ENCODE measurements at regions of chr1 and their contacts with region 1.

Region 1: GRCh38 chr1:160675641-160676410 is 29.0 kb upstream of the SLAMF1 start:
- DNase-seq: peak; percentile 58 to 84 (median 60)
- H3K4me3 ChIP-seq: no peak overlapping the region
- H3K4me3 Mint-ChIP-seq: peak overlapping the region in 2 of 7 donors; percentile 24 to 63
- H3K27ac ChIP-seq: no peak overlapping the region
- H3K27ac Mint-ChIP-seq: peak overlapping the region in 7 of 8 donors; percentile 58 to 87 (median 82)
- H3K4me1 ChIP-seq: peaks cover 42% of the 10 kb centered on the region
- H3K4me1 Mint-ChIP-seq: peaks cover 19 to 35% (median 23%) of the 10 kb centered on the region in 3 donors
- H3K27me3 ChIP-seq: no peaks in the 10 kb centered on the region
- H3K27me3 Mint-ChIP-seq: no peaks in the 10 kb centered on the region

Region 2: DNA sequence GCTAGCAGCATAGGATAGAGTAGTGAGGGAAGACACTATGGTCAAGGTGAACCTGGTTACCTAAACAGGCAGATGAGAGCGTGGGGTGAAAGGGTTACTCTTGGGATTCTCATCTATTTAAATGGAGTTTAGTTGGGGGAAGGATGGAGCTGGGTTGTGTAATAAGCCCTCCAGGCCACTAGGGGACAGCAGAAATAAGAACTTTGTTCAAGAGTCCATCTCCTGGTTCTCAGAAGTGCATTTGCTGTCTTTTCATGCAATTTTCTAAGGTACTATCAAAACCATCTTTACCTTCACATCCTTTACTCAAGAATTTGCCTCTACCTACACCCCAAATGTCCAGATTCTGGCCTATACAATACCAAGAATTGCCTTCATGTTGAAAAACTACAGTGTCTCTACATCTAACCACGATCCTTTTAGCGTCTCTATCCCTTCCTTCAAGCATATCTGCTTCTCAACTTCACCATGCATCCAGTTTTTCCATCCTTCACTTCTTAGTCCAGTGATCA is 57.0 kb before region 1 on chr1:
- CTCF ChIA-PET with region 1: interaction called, 67 read pairs
- POLR2A ChIA-PET with region 1: no interaction called
- DNase-seq: peak in 4 of 5 donors; percentile 21 to 63 (median 44)
- H3K4me3 ChIP-seq: no peak overlapping the region
- H3K4me3 Mint-ChIP-seq: peak overlapping the region in 1 of 7 donors; percentile 1
- H3K27ac ChIP-seq: no peak overlapping the region
- H3K27ac Mint-ChIP-seq: peak overlapping the region; percentile 3 to 91 (median 63)
- H3K4me1 ChIP-seq: peaks cover 37% of the 10 kb centered on the region
- H3K4me1 Mint-ChIP-seq: peaks cover 62 to 86% (median 75%) of the 10 kb centered on the region in 3 donors
- H3K27me3 ChIP-seq: no peaks in the 10 kb centered on the region
- H3K27me3 Mint-ChIP-seq: no peaks in the 10 kb centered on the region

Region 3: DNA sequence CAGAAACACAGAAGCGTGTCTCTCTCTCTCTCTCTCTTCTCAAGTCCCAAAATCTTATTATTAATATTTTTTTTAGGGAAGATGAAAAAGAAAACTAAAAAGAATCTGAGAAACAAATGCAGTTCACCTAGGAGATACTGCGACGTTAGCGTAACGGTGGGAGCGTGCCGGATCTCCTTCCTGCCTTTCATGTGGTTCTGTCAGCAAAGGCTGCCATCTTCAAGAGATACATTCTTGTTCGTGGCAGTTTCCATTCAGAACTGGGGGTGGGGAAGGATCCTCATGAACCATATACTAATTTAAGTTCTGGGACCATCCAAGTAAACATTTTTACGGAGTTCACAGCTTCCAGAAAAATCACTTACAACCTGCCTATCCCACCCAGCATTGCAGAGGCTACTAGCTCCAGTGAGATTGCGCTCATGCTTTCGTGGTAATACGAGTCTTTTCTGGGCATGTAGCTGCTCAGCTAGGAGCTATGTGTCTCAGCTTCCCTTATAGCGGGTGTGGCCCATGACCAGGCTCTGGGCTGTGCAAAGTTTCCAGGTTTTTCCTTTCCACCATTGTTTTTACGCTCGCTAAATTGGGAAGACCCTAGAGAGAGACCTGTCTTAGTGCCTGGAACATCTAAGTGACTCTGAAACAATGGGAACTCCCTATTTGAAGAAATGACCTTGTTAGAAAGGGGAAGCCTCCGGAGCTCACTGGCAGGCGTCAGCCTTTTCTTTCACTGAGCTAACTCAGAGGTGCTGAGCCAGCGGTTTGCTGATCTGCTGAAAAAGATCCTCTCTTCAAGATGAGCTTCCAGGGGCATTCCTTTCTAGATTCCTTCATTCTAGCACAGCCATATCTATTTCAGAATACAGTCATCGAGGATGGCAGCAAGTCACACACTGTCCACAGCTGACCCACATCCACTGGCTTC is 46.3 kb before region 1 on chr1:
- CTCF ChIA-PET with region 1: interaction called, 67 read pairs
- POLR2A ChIA-PET with region 1: interaction called, 3 read pairs
- DNase-seq: peak; percentile 50 to 90 (median 85)
- H3K4me3 ChIP-seq: peak overlapping the region; percentile 52
- H3K4me3 Mint-ChIP-seq: peak overlapping the region; percentile 72 to 87 (median 82)
- H3K27ac ChIP-seq: peak overlapping the region; percentile 78
- H3K27ac Mint-ChIP-seq: peak overlapping the region; percentile 83 to 99 (median 98)
- H3K4me1 ChIP-seq: peaks cover 97% of the 10 kb centered on the region
- H3K4me1 Mint-ChIP-seq: peaks cover 99 to 100% (median 100%) of the 10 kb centered on the region in 3 donors
- H3K27me3 ChIP-seq: no peaks in the 10 kb centered on the region
- H3K27me3 Mint-ChIP-seq: no peaks in the 10 kb centered on the region

Region 4: DNA sequence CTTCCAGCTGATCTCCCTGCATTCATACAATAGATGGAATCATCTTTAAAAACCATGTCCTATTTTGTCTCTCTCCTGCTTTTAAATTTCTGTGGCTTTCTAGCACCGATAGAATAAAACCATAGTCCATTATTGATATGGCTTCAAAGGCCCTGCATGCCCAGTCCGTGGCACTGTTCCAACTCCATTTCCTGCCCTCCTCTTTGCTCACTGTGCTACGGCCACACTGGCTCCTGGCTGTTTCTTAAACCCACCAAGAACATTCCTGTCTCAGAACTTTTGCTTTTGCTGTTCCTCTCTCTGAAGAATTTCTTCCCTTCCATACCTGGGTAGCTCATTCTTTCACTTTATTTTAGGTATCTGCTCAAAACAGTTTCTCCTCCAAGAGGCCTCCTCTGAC is 36.2 kb before region 1 on chr1:
- CTCF ChIA-PET with region 1: interaction called, 14 read pairs
- POLR2A ChIA-PET with region 1: interaction called, 3 read pairs
- DNase-seq: peak in 1 of 5 donors; percentile 20
- H3K4me3 ChIP-seq: peak overlapping the region; percentile 17
- H3K4me3 Mint-ChIP-seq: peak overlapping the region; percentile 74 to 90 (median 84)
- H3K27ac ChIP-seq: peak overlapping the region; percentile 4
- H3K27ac Mint-ChIP-seq: peak overlapping the region; percentile 90 to 97 (median 96)
- H3K4me1 ChIP-seq: peaks cover 94% of the 10 kb centered on the region
- H3K4me1 Mint-ChIP-seq: peaks cover 94 to 99% (median 97%) of the 10 kb centered on the region in 3 donors
- H3K27me3 ChIP-seq: no peaks in the 10 kb centered on the region
- H3K27me3 Mint-ChIP-seq: peaks cover 0 to 1% of the 10 kb centered on the region in 2 donors

Region 5: DNA sequence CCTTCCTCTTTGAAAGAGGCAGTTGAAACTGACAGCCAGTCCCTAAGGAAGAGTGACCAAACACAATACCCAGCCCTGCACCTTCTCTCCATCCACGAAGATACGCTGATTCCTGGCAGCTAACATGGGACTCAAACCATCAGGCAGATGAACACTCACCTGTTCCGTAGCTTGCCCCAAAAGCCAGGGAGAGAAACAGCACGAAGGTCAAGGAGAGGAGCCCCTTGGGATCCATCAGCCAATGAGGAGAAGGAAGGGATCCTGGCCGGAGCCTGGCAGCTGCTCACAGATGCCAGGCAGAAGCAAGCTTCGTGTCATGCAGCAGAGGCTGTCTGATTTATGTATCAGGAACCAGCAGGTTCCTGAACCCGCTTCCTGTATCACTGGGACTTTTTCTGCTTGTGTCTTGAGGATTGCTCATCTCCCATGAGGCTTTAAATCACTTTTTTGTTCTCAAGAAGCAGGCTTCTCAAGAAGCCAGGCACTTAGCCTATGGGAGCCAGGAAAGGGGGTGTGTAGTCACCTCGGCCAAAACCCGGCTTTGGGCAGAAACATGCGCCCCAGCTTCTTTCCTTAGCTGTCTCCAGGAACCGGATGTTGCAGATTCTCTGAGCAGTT is 29.0 kb before region 1 on chr1 and contains the start of gene SLAMF1:
- CTCF ChIA-PET with region 1: interaction called, 15 read pairs
- POLR2A ChIA-PET with region 1: no interaction called
- DNase-seq: peak in 4 of 5 donors; percentile 19 to 58 (median 50)
- H3K4me3 ChIP-seq: peak within 1 kb of the TSS; percentile 86
- H3K4me3 Mint-ChIP-seq: peak within 1 kb of the TSS; percentile 94 to 100 (median 99)
- H3K27ac ChIP-seq: peak within 1 kb of the TSS; percentile 68
- H3K27ac Mint-ChIP-seq: peak within 1 kb of the TSS; percentile 87 to 99 (median 97)
- H3K4me1 ChIP-seq: peaks cover 59% of the 10 kb centered on the region
- H3K4me1 Mint-ChIP-seq: peaks cover 67 to 86% (median 75%) of the 10 kb centered on the region in 3 donors
- H3K27me3 ChIP-seq: no peaks in the 10 kb centered on the region
- H3K27me3 Mint-ChIP-seq: no peaks in the 10 kb centered on the region
- total RNA-seq, gene SLAMF1: 74.0 to 75.0 TPM

Region 6: DNA sequence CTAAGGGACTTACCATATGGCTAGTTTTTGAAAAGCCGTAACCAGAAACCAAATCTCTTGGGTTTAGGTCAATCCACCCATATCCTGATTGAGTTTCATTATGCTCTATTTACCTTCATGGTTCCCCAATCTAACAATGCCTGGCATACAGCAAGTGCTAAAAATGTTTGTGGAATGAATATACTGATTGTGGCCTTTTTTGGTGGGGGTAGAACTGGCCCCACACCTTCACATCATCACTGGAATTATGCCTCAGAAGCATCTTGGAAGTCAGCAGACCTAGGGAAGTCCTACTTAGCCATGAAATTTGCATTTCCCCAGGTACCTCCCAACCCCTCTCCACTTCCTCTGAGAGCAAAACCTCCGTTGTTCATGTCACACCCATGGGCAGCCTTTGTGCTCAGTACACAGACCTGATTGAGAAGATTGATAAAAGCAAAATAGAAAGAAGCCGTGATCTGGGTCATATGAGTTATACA is 11.2 kb before region 1 on chr1:
- CTCF ChIA-PET with region 1: interaction called, 21 read pairs
- POLR2A ChIA-PET with region 1: interaction called, 3 read pairs
- DNase-seq: peak in 3 of 5 donors; percentile 24 to 64 (median 59)
- H3K4me3 ChIP-seq: peak overlapping the region; percentile 6
- H3K4me3 Mint-ChIP-seq: peak overlapping the region; percentile 35 to 79 (median 69)
- H3K27ac ChIP-seq: peak overlapping the region; percentile 58
- H3K27ac Mint-ChIP-seq: peak overlapping the region; percentile 68 to 97 (median 90)
- H3K4me1 ChIP-seq: peaks cover 55% of the 10 kb centered on the region
- H3K4me1 Mint-ChIP-seq: peaks cover 64 to 78% (median 68%) of the 10 kb centered on the region in 3 donors
- H3K27me3 ChIP-seq: no peaks in the 10 kb centered on the region
- H3K27me3 Mint-ChIP-seq: no peaks in the 10 kb centered on the region

Region 7: GRCh38 chr1:160711602-160712311 is 35.9 kb after region 1 on chr1 and contains the start of gene CD48:
- CTCF ChIA-PET with region 1: interaction called, 22 read pairs
- POLR2A ChIA-PET with region 1: interaction called, 4 read pairs
- DNase-seq: peak; percentile 27 to 86 (median 78)
- H3K4me3 ChIP-seq: peak within 1 kb of the TSS; percentile 88
- H3K4me3 Mint-ChIP-seq: no peak within 1 kb of the TSS
- H3K27ac ChIP-seq: peak within 1 kb of the TSS; percentile 56
- H3K27ac Mint-ChIP-seq: peak within 1 kb of the TSS in 1 of 8 donors; percentile 89
- H3K4me1 ChIP-seq: peaks cover 70% of the 10 kb centered on the region
- H3K4me1 Mint-ChIP-seq: peaks cover 35 to 49% (median 47%) of the 10 kb centered on the region in 3 donors
- H3K27me3 ChIP-seq: no peaks in the 10 kb centered on the region
- H3K27me3 Mint-ChIP-seq: no peaks in the 10 kb centered on the region
- total RNA-seq, gene CD48: 224 to 234 TPM

Measured in CD8-positive, alpha-beta memory T cell (primary cell).